ENCODE measurements at regions of chr7 and their contacts with region 1.

Region 1: DNA sequence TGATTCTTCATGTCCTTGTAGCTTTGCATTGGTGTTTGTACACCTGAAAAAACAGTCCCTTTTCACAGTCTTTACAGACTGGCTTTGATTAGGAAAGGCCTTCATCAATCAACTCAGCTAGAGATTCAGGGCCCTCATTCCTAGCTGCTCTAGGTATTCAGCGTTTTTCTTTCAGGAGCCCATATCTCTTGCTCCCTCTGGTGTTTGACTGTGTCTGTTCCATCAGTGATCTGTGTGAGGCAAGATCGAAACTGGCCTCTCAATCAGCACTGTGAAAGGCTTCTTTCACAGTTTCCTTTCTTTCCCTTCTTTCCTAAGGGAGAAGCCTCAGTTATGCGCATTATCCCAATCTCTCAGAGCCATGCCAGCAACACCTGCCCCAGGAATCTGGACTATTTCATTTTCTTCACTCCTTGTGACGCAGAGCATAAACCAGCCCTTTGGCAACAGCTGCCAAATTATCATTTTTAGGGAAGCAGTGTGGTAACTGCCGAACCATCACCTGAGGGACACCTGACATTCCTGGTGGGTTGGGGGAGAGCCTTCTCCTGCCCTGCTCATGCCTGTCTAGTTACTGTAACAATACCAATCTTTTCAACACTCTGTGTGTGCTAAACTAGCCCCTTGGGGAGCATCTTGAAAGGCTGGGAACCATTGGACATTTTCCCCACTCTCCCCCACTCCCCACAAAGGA is 75.7 kb upstream of the CCDC71L start:
- DNase-seq: peak in 7 of 9 experiments; percentile 11 to 75 (median 22)
- ATAC-seq: peak; percentile 77
- H3K4me3 ChIP-seq: no peak overlapping the region
- H3K4me3 Mint-ChIP-seq: no peak overlapping the region
- H3K27ac ChIP-seq: no peak overlapping the region
- H3K27ac Mint-ChIP-seq: no peak overlapping the region
- H3K4me1 ChIP-seq: peaks cover 6% of the 10 kb centered on the region
- H3K4me1 Mint-ChIP-seq: peaks cover 14% of the 10 kb centered on the region
- H3K27me3 ChIP-seq: no peaks in the 10 kb centered on the region
- H3K27me3 Mint-ChIP-seq: no peaks in the 10 kb centered on the region
- CTCF ChIP-seq: peak; percentile 54

Region 2: DNA sequence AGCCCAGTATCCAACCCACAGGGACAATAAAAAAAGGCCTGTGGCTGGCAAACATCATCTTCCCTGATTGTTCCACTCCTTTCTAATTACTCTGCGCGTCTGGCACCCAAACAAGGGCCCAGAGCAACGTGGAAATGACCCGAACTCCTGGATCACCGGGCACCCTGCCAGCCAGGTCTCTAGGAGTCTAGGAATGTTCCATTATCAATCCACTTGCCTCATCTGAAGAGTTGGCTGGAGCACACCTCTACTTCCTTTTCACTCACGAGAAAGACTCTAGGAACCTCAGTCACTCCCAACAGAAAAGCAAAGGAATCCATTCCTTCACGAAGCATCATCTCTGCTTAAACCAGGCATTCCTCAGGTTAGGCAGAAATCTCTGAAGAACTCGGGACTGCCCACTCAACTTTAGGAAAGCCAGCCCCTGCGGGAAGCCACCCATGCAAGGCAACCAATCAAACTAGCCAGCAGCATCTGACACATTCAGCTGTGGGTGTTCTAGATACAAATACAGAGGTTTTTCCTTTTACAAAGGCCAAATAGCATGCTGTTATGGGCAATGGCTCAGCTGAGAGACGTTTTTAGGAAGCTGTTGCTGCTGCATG is 897.9 kb before region 1 on chr7:
- CTCF ChIA-PET with region 1: no interaction called
- POLR2A ChIA-PET with region 1: no interaction called
- intact Hi-C with region 1: no loop called
- DNase-seq: no peak
- ATAC-seq: no peak
- H3K4me3 ChIP-seq: no peak overlapping the region
- H3K4me3 Mint-ChIP-seq: no peak overlapping the region
- H3K27ac ChIP-seq: no peak overlapping the region
- H3K27ac Mint-ChIP-seq: no peak overlapping the region
- H3K4me1 ChIP-seq: no peaks in the 10 kb centered on the region
- H3K4me1 Mint-ChIP-seq: peaks cover 27% of the 10 kb centered on the region
- H3K27me3 ChIP-seq: no peaks in the 10 kb centered on the region
- H3K27me3 Mint-ChIP-seq: no peaks in the 10 kb centered on the region
- CTCF ChIP-seq: no peak

Region 3: GRCh38 chr7:106542550-106543220 is 194.0 kb before region 1 on chr7:
- CTCF ChIA-PET with region 1: interaction called, 17 read pairs
- POLR2A ChIA-PET with region 1: no interaction called
- intact Hi-C with region 1: loop called (anchors 1 to 2 kb)
- DNase-seq: peak in 5 of 9 experiments; percentile 9 to 54 (median 29)
- ATAC-seq: peak; percentile 29
- H3K4me3 ChIP-seq: no peak overlapping the region
- H3K4me3 Mint-ChIP-seq: no peak overlapping the region
- H3K27ac ChIP-seq: no peak overlapping the region
- H3K27ac Mint-ChIP-seq: no peak overlapping the region
- H3K4me1 ChIP-seq: no peaks in the 10 kb centered on the region
- H3K4me1 Mint-ChIP-seq: peaks cover 4% of the 10 kb centered on the region
- H3K27me3 ChIP-seq: no peaks in the 10 kb centered on the region
- H3K27me3 Mint-ChIP-seq: peaks cover 4% of the 10 kb centered on the region
- CTCF ChIP-seq: peak; percentile 38

Measured in CD8-positive, alpha-beta T cell (primary cell).